PC-9 (cell line): ENCODE measurements at regions of chr20 and their contacts with region 1.

Region 1: GRCh38 chr20:12925214-12925755 is 83.5 kb upstream of the SPTLC3 start:
- DNase-seq: peak; percentile 63 to 69
- H3K4me3 ChIP-seq: no peak overlapping the region
- H3K27ac ChIP-seq: no peak overlapping the region
- H3K4me1 ChIP-seq: peaks cover 34% of the 10 kb centered on the region
- H3K27me3 ChIP-seq: no peaks in the 10 kb centered on the region
- CTCF ChIP-seq: peak; percentile 85

Region 2: GRCh38 chr20:12970372-12970821 is 45.1 kb after region 1 on chr20:
- CTCF ChIA-PET with region 1: interaction called, 3 read pairs
- POLR2A ChIA-PET with region 1: no interaction called
- intact Hi-C with region 1: loop called (anchors 1 kb)
- DNase-seq: no peak
- H3K4me3 ChIP-seq: no peak overlapping the region
- H3K27ac ChIP-seq: no peak overlapping the region
- H3K4me1 ChIP-seq: no peaks in the 10 kb centered on the region
- H3K27me3 ChIP-seq: no peaks in the 10 kb centered on the region
- CTCF ChIP-seq: peak; percentile 63

Region 3: GRCh38 chr20:13105864-13106457 is 180.7 kb after region 1 on chr20:
- CTCF ChIA-PET with region 1: no interaction called
- POLR2A ChIA-PET with region 1: no interaction called
- intact Hi-C with region 1: loop called (anchors 1 kb)
- DNase-seq: no peak
- H3K4me3 ChIP-seq: no peak overlapping the region
- H3K27ac ChIP-seq: no peak overlapping the region
- H3K4me1 ChIP-seq: peaks cover 14% of the 10 kb centered on the region
- H3K27me3 ChIP-seq: no peaks in the 10 kb centered on the region
- CTCF ChIP-seq: peak; percentile 83

Region 4: DNA sequence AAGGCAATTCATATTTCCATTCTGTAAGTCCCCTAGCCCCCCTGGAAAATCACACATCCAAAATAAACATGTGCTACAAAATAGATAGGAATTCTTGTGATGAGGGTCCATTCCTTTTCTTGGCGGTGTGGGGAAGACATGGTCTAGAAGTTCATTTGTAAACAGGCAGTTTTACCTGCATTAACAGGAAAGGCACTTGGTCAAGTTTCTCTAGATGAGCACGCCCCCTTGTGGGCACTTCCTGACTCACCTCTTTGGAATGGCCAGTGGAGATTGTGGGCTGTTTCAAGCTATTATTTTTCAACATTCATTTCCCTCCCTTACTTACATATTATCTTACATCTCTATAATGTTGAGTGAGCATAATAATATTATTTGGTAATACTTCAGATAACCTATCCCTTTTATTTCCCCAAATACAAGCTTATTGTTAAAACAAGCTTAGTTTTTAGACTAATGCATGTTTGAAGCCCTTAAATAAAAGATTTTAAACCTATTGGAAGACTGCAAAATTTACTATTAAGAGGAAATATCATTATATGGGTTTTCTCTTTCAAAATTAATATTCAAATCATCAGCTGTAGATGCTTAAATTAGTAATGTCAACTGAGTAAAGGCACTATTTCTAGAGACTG is 621.3 kb after region 1 on chr20:
- CTCF ChIA-PET with region 1: interaction called, 7 read pairs
- POLR2A ChIA-PET with region 1: no interaction called
- intact Hi-C with region 1: loop called (anchors 5 kb)
- DNase-seq: peak; percentile 37 to 77
- H3K4me3 ChIP-seq: no peak overlapping the region
- H3K27ac ChIP-seq: no peak overlapping the region
- H3K4me1 ChIP-seq: no peaks in the 10 kb centered on the region
- H3K27me3 ChIP-seq: no peaks in the 10 kb centered on the region
- CTCF ChIP-seq: peak; percentile 83

Region 5: DNA sequence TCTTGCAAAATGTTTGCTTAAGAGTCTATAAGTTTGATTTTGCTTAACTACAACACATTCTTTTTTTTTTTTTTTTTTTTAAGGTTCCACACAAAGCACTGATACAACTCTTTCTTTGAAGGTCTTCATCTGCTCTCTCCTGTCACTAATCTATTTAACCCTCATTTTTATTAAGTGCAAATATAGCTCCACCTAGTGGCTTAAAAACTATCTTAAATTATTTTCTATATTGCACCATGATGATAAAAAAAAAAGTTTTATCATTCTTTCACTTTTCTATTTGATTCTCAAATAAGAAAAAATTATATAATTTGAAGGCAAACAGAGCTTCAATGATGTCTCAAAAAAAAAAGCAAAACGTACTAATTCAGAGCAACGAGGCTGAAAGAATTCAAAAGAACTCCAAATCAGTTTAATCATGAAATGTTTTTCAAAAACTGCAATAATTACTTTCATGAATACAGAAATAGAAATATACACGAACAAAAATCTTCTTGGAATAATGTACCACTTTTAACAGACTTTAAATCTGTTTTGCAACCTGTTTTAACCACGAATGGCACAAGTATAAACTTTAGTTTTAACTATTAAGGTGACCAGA is 846.7 kb after region 1 on chr20:
- CTCF ChIA-PET with region 1: interaction called, 14 read pairs
- POLR2A ChIA-PET with region 1: no interaction called
- intact Hi-C with region 1: loop called (anchors 1 kb)
- DNase-seq: peak in 1 of 2 experiments; percentile 43
- H3K4me3 ChIP-seq: no peak overlapping the region
- H3K27ac ChIP-seq: no peak overlapping the region
- H3K4me1 ChIP-seq: no peaks in the 10 kb centered on the region
- H3K27me3 ChIP-seq: no peaks in the 10 kb centered on the region
- CTCF ChIP-seq: peak; percentile 83

Region 6: GRCh38 chr20:14055127-14055742 is 1130.0 kb after region 1 on chr20:
- CTCF ChIA-PET with region 1: no interaction called
- POLR2A ChIA-PET with region 1: no interaction called
- intact Hi-C with region 1: loop called (anchors 5 kb)
- DNase-seq: peak in 1 of 2 experiments; percentile 15
- H3K4me3 ChIP-seq: no peak overlapping the region
- H3K27ac ChIP-seq: no peak overlapping the region
- H3K4me1 ChIP-seq: no peaks in the 10 kb centered on the region
- H3K27me3 ChIP-seq: no peaks in the 10 kb centered on the region
- CTCF ChIP-seq: peak; percentile 72